Endothelial cell of umbilical vein (primary cell): ENCODE measurements at regions of chr20 and their contacts with region 1.

Region 1: GRCh38 chr20:48682529-48683251 is 145.1 kb downstream of the PREX1 start:
- DNase-seq: peak; percentile 89
- H3K4me3 ChIP-seq: no peak overlapping the region
- H3K27ac ChIP-seq: peak overlapping the region; percentile 48
- H3K4me1 ChIP-seq: peaks cover 56% of the 10 kb centered on the region
- H3K27me3 ChIP-seq: no peaks in the 10 kb centered on the region
- CTCF ChIP-seq: no peak
- POLR2A ChIP-seq: no peak

Region 2: GRCh38 chr20:47464380-47465101 is 1218.1 kb before region 1 on chr20:
- CTCF ChIA-PET with region 1: no interaction called
- POLR2A ChIA-PET with region 1: no interaction called
- dilution Hi-C with region 1: no loop called
- intact Hi-C with region 1: no loop called
- DNase-seq: peak; percentile 94
- H3K4me3 ChIP-seq: no peak overlapping the region
- H3K27ac ChIP-seq: no peak overlapping the region
- H3K4me1 ChIP-seq: peaks cover 6% of the 10 kb centered on the region
- H3K27me3 ChIP-seq: no peaks in the 10 kb centered on the region
- CTCF ChIP-seq: peak; percentile 13 to 27
- POLR2A ChIP-seq: no peak

Region 3: GRCh38 chr20:48350313-48351008 is 332.2 kb before region 1 on chr20:
- CTCF ChIA-PET with region 1: no interaction called
- POLR2A ChIA-PET with region 1: no interaction called
- dilution Hi-C with region 1: no loop called
- intact Hi-C with region 1: no loop called
- DNase-seq: no peak
- H3K4me3 ChIP-seq: no peak overlapping the region
- H3K27ac ChIP-seq: no peak overlapping the region
- H3K4me1 ChIP-seq: no peaks in the 10 kb centered on the region
- H3K27me3 ChIP-seq: peaks cover 4 to 8% of the 10 kb centered on the region in 2 experiments
- CTCF ChIP-seq: peak; percentile 13 to 26
- POLR2A ChIP-seq: no peak

Region 4: GRCh38 chr20:48431653-48432516 is 250.8 kb before region 1 on chr20:
- CTCF ChIA-PET with region 1: no interaction called
- POLR2A ChIA-PET with region 1: no interaction called
- dilution Hi-C with region 1: no loop called
- intact Hi-C with region 1: no loop called
- DNase-seq: no peak
- H3K4me3 ChIP-seq: no peak overlapping the region
- H3K27ac ChIP-seq: no peak overlapping the region
- H3K4me1 ChIP-seq: no peaks in the 10 kb centered on the region
- H3K27me3 ChIP-seq: no peaks in the 10 kb centered on the region
- CTCF ChIP-seq: no peak
- POLR2A ChIP-seq: no peak

Region 5: GRCh38 chr20:48448629-48449600 is 233.8 kb before region 1 on chr20:
- CTCF ChIA-PET with region 1: no interaction called
- POLR2A ChIA-PET with region 1: no interaction called
- dilution Hi-C with region 1: no loop called
- intact Hi-C with region 1: no loop called
- DNase-seq: no peak
- H3K4me3 ChIP-seq: no peak overlapping the region
- H3K27ac ChIP-seq: no peak overlapping the region
- H3K4me1 ChIP-seq: no peaks in the 10 kb centered on the region
- H3K27me3 ChIP-seq: no peaks in the 10 kb centered on the region
- CTCF ChIP-seq: no peak
- POLR2A ChIP-seq: no peak

Region 6: DNA sequence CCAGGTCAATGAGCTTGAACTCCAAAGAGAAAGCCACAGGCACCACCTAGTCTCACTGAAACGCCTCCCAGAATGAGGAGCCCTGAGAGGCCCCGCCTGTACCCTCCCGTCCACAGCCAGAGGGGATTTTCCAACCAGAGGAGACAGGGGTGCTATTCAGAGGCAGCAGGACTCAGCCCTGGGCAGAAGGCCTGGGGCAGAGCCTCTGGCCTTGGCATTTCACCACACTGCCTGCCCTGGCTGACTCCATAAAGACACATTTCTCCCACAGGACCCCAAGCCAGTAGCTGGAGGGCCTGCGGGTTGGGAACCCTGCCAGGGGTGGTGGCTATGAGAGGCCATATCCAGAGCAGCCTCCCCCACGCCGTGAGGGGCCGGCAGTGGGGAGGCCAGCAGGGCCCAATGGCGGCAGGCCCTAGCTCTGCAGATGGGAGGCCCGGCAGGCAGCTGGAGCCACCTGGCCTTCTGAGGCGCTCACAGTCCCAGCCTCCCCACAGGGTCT is 14.2 kb before region 1 on chr20:
- CTCF ChIA-PET with region 1: interaction called, 20 read pairs
- POLR2A ChIA-PET with region 1: interaction called, 3 read pairs
- dilution Hi-C with region 1: no loop called
- intact Hi-C with region 1: loop called (anchors 1 kb)
- DNase-seq: no peak
- H3K4me3 ChIP-seq: no peak overlapping the region
- H3K27ac ChIP-seq: peak overlapping the region; percentile 57
- H3K4me1 ChIP-seq: peaks cover 34% of the 10 kb centered on the region
- H3K27me3 ChIP-seq: no peaks in the 10 kb centered on the region
- CTCF ChIP-seq: no peak
- POLR2A ChIP-seq: no peak

Region 7: GRCh38 chr20:48697879-48698724 is 15.4 kb after region 1 on chr20:
- CTCF ChIA-PET with region 1: interaction called, 11 read pairs
- POLR2A ChIA-PET with region 1: no interaction called
- dilution Hi-C with region 1: no loop called
- intact Hi-C with region 1: no loop called
- DNase-seq: peak; percentile 20
- H3K4me3 ChIP-seq: no peak overlapping the region
- H3K27ac ChIP-seq: no peak overlapping the region
- H3K4me1 ChIP-seq: no peaks in the 10 kb centered on the region
- H3K27me3 ChIP-seq: no peaks in the 10 kb centered on the region
- CTCF ChIP-seq: no peak
- POLR2A ChIP-seq: no peak

Region 8: GRCh38 chr20:48738399-48739304 is 56.0 kb after region 1 on chr20:
- CTCF ChIA-PET with region 1: no interaction called
- POLR2A ChIA-PET with region 1: no interaction called
- dilution Hi-C with region 1: no loop called
- intact Hi-C with region 1: loop called (anchors 2 kb)
- DNase-seq: peak; percentile 49
- H3K4me3 ChIP-seq: no peak overlapping the region
- H3K27ac ChIP-seq: no peak overlapping the region
- H3K4me1 ChIP-seq: peaks cover 19% of the 10 kb centered on the region
- H3K27me3 ChIP-seq: no peaks in the 10 kb centered on the region
- CTCF ChIP-seq: no peak
- POLR2A ChIP-seq: no peak